Heart left ventricle (tissue), 16 donors: ENCODE measurements at regions of chr18 and their contacts with region 1.

Region 1: GRCh38 chr18:46173393-46174341 is 69.5 kb downstream of the HAUS1 start:
- DNase-seq: peak; percentile 94 to 97 (median 96)
- ATAC-seq: peak; percentile 94 to 99 (median 98)
- H3K4me3 ChIP-seq: peak overlapping the region; percentile 74 to 99 (median 96)
- H3K27ac ChIP-seq: peak overlapping the region; percentile 45 to 96 (median 93)
- H3K4me1 ChIP-seq: peaks cover 3 to 39% (median 22%) of the 10 kb centered on the region in 12 donors
- H3K27me3 ChIP-seq: no peaks in the 10 kb centered on the region
- CTCF ChIP-seq: peak; percentile 69 to 85 (median 78)
- POLR2A ChIP-seq: peak in 1 of 2 donors; percentile 69

Region 2: DNA sequence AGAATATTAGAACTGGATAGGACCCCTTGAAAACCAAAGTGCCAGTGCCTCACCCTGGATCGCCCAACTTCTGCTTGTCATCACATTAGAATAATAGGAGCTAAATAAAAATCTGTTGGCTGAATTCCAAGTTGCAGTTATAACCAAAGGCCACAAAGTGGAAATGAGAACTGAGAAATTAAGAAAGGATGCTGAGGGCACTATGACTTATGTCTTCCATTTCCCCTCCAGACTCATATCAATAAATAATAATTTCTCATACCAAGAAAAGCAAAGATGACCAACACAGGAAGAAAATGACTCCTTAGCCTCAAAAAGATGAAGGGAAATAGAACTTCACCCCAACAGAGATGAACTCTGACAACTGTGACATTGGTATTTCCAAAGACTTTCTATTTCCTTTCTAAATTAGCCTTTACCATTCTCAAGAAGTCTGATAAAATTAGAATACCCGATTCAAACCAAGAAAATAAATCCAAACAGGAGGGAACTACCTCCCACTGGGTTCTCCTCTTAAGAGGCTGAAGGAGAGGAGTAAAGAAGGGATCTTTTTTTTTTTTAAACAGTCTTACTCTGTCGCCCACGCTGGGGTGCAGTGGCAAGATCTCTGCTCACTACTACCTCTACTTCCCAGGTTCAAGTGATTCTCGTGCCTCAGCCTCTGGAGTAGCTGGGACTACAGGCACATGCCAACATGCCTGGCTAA is 160.0 kb before region 1 on chr18:
- intact Hi-C with region 1: no loop called
- DNase-seq: no peak
- ATAC-seq: no peak
- H3K4me3 ChIP-seq: no peak overlapping the region
- H3K27ac ChIP-seq: no peak overlapping the region
- H3K4me1 ChIP-seq: peaks cover 0 to 34% (median 0%) of the 10 kb centered on the region in 12 donors
- H3K27me3 ChIP-seq: no peaks in the 10 kb centered on the region
- CTCF ChIP-seq: no peak
- POLR2A ChIP-seq: no peak

Region 3: GRCh38 chr18:46158498-46158897 is 15.2 kb before region 1 on chr18:
- intact Hi-C with region 1: no loop called
- DNase-seq: no peak
- ATAC-seq: peak; percentile 45 to 68 (median 51)
- H3K4me3 ChIP-seq: no peak overlapping the region
- H3K27ac ChIP-seq: peak overlapping the region in 4 of 12 donors; percentile 12 to 34 (median 32)
- H3K4me1 ChIP-seq: peaks cover 0 to 11% (median 0%) of the 10 kb centered on the region in 12 donors
- H3K27me3 ChIP-seq: no peaks in the 10 kb centered on the region
- CTCF ChIP-seq: no peak
- POLR2A ChIP-seq: no peak

Region 4: GRCh38 chr18:46213295-46213694 is 39.6 kb after region 1 on chr18:
- intact Hi-C with region 1: loop called in 9 of 10 experiments (anchors 2 to 5 kb)
- DNase-seq: no peak
- ATAC-seq: peak in 1 of 4 donors; percentile 45
- H3K4me3 ChIP-seq: no peak overlapping the region
- H3K27ac ChIP-seq: no peak overlapping the region
- H3K4me1 ChIP-seq: peaks cover 0 to 47% (median 29%) of the 10 kb centered on the region in 12 donors
- H3K27me3 ChIP-seq: no peaks in the 10 kb centered on the region
- CTCF ChIP-seq: peak; percentile 26 to 65 (median 50)
- POLR2A ChIP-seq: no peak

Region 5: DNA sequence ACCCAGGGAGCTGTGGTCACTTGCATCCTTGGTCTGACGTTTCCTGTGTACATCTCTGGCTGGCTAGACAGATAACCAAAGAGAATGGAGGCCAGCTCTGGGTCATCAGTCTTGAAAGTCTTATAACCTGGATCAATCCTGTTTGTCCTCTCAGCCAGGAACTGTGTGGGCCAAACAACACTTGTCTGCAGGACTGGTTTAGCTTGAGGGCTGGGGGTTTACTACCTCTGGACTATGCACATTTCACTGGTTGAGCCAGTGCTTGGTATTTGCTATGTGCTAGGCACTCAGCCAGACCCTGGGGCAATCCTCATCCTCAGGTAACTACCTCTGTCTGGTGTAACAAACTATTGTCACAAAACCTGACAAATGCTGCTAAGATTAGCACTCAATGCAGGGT is 100.2 kb after region 1 on chr18:
- intact Hi-C with region 1: loop called (anchors 5 to 10 kb)
- DNase-seq: no peak
- ATAC-seq: no peak
- H3K4me3 ChIP-seq: no peak overlapping the region
- H3K27ac ChIP-seq: no peak overlapping the region
- H3K4me1 ChIP-seq: peaks cover 0 to 25% (median 10%) of the 10 kb centered on the region in 12 donors
- H3K27me3 ChIP-seq: no peaks in the 10 kb centered on the region
- CTCF ChIP-seq: no peak
- POLR2A ChIP-seq: no peak

Region 6: DNA sequence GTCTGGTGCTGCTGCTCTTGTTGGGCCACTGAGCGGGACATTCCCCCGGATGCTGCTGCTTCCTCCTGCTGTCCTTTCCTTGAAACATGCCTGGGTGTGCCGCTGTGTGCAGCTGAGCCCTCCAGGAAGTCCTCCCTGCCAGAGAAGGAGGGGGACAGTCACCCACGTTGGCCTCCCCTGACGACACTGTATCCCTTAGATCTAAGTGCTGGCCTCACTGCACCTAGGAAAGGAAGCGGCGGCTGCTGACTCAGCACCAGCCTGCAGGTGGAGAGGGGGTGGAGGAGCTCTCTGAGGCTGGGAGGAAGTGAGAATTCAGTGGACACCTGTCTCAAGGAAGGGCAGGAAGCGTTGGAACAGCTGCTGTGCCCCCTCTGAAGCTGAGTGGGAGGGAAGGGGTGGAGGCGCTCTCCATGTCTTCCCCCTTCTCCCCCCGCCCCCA is 170.3 kb after region 1 on chr18:
- intact Hi-C with region 1: no loop called
- DNase-seq: peak; percentile 48 to 72 (median 52)
- ATAC-seq: peak; percentile 41 to 89 (median 64)
- H3K4me3 ChIP-seq: no peak overlapping the region
- H3K27ac ChIP-seq: peak overlapping the region in 7 of 12 donors; percentile 14 to 54 (median 36)
- H3K4me1 ChIP-seq: peaks cover 0 to 30% (median 16%) of the 10 kb centered on the region in 12 donors
- H3K27me3 ChIP-seq: no peaks in the 10 kb centered on the region
- CTCF ChIP-seq: no peak
- POLR2A ChIP-seq: no peak

Region 7: DNA sequence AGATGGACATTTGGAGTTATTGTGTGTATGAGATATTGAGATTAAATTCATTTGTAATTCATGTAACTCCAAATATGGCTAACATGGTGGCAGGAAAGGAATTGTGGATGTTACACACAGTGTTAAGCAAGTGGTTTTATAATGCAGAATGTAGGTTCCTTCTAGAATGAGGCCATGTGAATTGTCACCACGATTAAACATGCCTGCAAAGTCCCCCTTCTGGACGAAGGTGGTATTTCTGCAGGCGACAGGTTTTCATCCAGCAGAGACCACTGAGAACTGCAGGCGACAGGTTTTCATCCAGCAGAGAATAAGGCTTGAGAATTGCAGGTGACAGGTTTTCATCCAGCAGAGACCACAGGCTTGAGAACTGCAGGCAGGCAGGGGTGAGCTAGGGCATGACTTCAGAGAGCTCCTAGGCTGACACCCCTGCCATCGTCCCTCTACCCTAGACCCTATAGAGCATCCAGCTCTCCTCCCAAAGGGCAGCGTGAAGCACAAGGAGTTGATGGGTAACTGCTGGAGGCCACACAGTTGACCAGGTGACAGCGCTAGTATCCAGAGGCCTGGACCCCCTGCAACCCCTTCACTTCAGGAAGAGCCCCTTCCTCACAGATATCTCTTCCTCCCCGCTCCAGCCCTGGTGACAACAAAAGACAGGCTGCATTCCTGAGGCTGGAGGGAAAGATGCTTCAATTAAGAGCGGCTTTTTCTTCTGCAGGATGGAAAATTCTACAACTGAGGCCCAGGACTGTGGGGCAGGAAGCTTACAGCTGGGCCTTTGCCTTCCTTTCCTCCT is 307.6 kb after region 1 on chr18:
- intact Hi-C with region 1: loop called in 1 of 10 experiments (anchors 2 kb)
- DNase-seq: peak in 2 of 5 donors; percentile 26 to 45
- ATAC-seq: peak in 2 of 4 donors; percentile 53 to 61
- H3K4me3 ChIP-seq: no peak overlapping the region
- H3K27ac ChIP-seq: no peak overlapping the region
- H3K4me1 ChIP-seq: peaks cover 0 to 10% (median 0%) of the 10 kb centered on the region in 12 donors
- H3K27me3 ChIP-seq: no peaks in the 10 kb centered on the region
- CTCF ChIP-seq: peak; percentile 59 to 81 (median 70)
- POLR2A ChIP-seq: no peak

Region 8: GRCh38 chr18:46660955-46661749 is 487.5 kb after region 1 on chr18:
- intact Hi-C with region 1: loop called in 8 of 10 experiments (anchors 1 to 10 kb)
- DNase-seq: no peak
- ATAC-seq: peak in 2 of 4 donors; percentile 32 to 36
- H3K4me3 ChIP-seq: no peak overlapping the region
- H3K27ac ChIP-seq: no peak overlapping the region
- H3K4me1 ChIP-seq: no peaks in the 10 kb centered on the region
- H3K27me3 ChIP-seq: peaks cover 0 to under 1% (median 0%) of the 10 kb centered on the region in 9 donors
- CTCF ChIP-seq: no peak
- POLR2A ChIP-seq: no peak